ENCODE measurements at regions of chr21 and their contacts with region 1.

Region 1: GRCh38 chr21:22020221-22020620 is 1022.0 kb downstream of the NCAM2 start:
- DNase-seq: no peak
- ATAC-seq: no peak
- H3K4me3 ChIP-seq: no peak overlapping the region
- H3K27ac ChIP-seq: no peak overlapping the region
- H3K4me1 ChIP-seq: no peaks in the 10 kb centered on the region
- H3K27me3 ChIP-seq: no peaks in the 10 kb centered on the region
- CTCF ChIP-seq: no peak

Region 2: GRCh38 chr21:21631961-21632360 is 388.3 kb before region 1 on chr21:
- intact Hi-C with region 1: no loop called
- DNase-seq: peak; percentile 7 to 10
- ATAC-seq: no peak
- H3K4me3 ChIP-seq: no peak overlapping the region
- H3K27ac ChIP-seq: no peak overlapping the region
- H3K4me1 ChIP-seq: no peaks in the 10 kb centered on the region
- H3K27me3 ChIP-seq: no peaks in the 10 kb centered on the region
- CTCF ChIP-seq: no peak

Region 3: GRCh38 chr21:22040975-22041374 is 20.8 kb after region 1 on chr21:
- intact Hi-C with region 1: loop called in 1 of 10 experiments (anchors 1 kb)
- DNase-seq: no peak
- ATAC-seq: no peak
- H3K4me3 ChIP-seq: no peak overlapping the region
- H3K27ac ChIP-seq: no peak overlapping the region
- H3K4me1 ChIP-seq: no peaks in the 10 kb centered on the region
- H3K27me3 ChIP-seq: no peaks in the 10 kb centered on the region
- CTCF ChIP-seq: no peak

Measured in heart right ventricle (tissue), 16 donors.